HEK293 (cell line): ENCODE measurements at regions of chr5 and their contacts with region 1.

Region 1: GRCh38 chr5:177454397-177455035 is 7.9 kb downstream of the PRR7 start:
- H3K4me3 ChIP-seq: peak overlapping the region; percentile 69
- H3K27ac ChIP-seq: peak overlapping the region; percentile 89
- H3K4me1 ChIP-seq: peaks cover 8% of the 10 kb centered on the region
- CTCF ChIP-seq: peak; percentile 90

Region 2: GRCh38 chr5:177317959-177318377 is 136.5 kb before region 1 on chr5:
- CTCF ChIA-PET with region 1: interaction called, 12 read pairs
- POLR2A ChIA-PET with region 1: no interaction called
- H3K4me3 ChIP-seq: no peak overlapping the region
- H3K27ac ChIP-seq: no peak overlapping the region
- H3K4me1 ChIP-seq: no peaks in the 10 kb centered on the region; the same call in 1 of the 2 replicates
- CTCF ChIP-seq: peak; percentile 58

Region 3: GRCh38 chr5:177390363-177391300 is 63.9 kb before region 1 on chr5:
- CTCF ChIA-PET with region 1: interaction called, 88 read pairs
- POLR2A ChIA-PET with region 1: interaction called, 5 read pairs
- H3K4me3 ChIP-seq: no peak overlapping the region
- H3K27ac ChIP-seq: no peak overlapping the region
- H3K4me1 ChIP-seq: no peaks in the 10 kb centered on the region
- CTCF ChIP-seq: peak; percentile 94

Region 4: GRCh38 chr5:177425801-177426565 is 28.5 kb before region 1 on chr5:
- CTCF ChIA-PET with region 1: interaction called, 5 read pairs
- POLR2A ChIA-PET with region 1: interaction called, 19 read pairs
- H3K4me3 ChIP-seq: peak overlapping the region; percentile 68
- H3K27ac ChIP-seq: peak overlapping the region; percentile 62
- H3K4me1 ChIP-seq: no peaks in the 10 kb centered on the region
- CTCF ChIP-seq: no peak